ENCODE measurements at regions of chr19 and their contacts with region 1.

Region 1: DNA sequence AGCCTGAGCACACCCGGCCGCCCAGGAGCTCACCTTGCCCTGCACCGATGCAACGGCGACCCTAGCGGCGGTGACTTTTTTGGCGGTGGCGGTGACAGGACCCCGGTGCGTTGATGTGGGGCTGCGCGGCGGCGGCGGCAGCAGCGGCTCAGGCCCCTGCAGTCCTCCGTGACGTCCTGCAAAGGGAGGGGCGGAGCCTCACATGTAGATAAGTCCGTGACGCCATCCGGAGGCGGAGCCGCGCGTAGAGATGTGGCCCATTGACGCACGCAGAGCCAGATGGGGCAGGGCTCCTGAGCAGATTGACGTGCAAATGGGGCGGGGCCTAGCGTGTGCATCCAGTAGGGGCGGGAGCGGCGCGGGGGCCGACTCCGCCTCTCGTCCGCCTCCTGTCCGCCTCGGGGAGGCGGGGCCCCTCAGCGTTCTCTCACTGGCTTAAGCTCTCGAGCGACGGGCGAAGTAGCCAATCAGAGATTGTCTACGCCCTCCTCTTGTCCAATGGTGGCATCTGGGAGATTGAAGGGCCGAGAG is at the start of gene RAB3A:
- DNase-seq: peak; percentile 100
- H3K4me3 ChIP-seq: peak within 1 kb of the TSS; percentile 82 to 83
- H3K27ac ChIP-seq: peak within 1 kb of the TSS; percentile 95 to 98
- H3K4me1 ChIP-seq: peaks cover 7 to 20% of the 10 kb centered on the region in 2 donors
- H3K27me3 ChIP-seq: no peaks in the 10 kb centered on the region
- CTCF ChIP-seq: no peak
- total RNA-seq, gene RAB3A: 12.3 TPM

Region 2: DNA sequence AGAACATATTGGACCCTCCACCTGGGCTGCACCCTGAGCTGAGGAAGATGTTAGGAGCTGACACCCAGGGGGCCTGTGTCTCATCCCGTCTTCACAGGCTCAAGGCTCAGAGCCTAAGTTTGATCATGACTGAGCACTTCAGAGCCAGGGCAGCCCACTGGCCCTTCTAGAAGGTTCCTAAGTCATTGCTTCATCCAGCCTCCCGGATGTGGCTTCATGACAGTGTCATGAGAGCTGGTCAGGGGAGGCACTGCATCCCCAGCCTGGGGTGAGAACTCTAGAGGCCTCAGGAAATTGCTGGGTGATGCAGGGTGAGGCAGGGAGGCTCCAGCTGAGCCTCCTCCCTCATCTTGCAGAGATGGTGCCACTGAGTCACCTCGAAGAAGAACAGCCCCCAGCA is 75.9 kb before region 1 on chr19:
- intact Hi-C with region 1: no loop called
- DNase-seq: no peak
- H3K4me3 ChIP-seq: no peak overlapping the region
- H3K27ac ChIP-seq: no peak overlapping the region
- H3K4me1 ChIP-seq: no peaks in the 10 kb centered on the region
- H3K27me3 ChIP-seq: no peaks in the 10 kb centered on the region
- CTCF ChIP-seq: no peak

Region 3: GRCh38 chr19:18152444-18152816 is 51.5 kb before region 1 on chr19:
- intact Hi-C with region 1: loop called (anchors 1 kb)
- DNase-seq: peak; percentile 94 to 98
- H3K4me3 ChIP-seq: peak overlapping the region; percentile 86 to 96
- H3K27ac ChIP-seq: peak overlapping the region; percentile 93 to 95
- H3K4me1 ChIP-seq: peaks cover 14 to 18% of the 10 kb centered on the region in 2 donors
- H3K27me3 ChIP-seq: no peaks in the 10 kb centered on the region
- CTCF ChIP-seq: peak; percentile 53 to 82 (median 69)

Region 4: DNA sequence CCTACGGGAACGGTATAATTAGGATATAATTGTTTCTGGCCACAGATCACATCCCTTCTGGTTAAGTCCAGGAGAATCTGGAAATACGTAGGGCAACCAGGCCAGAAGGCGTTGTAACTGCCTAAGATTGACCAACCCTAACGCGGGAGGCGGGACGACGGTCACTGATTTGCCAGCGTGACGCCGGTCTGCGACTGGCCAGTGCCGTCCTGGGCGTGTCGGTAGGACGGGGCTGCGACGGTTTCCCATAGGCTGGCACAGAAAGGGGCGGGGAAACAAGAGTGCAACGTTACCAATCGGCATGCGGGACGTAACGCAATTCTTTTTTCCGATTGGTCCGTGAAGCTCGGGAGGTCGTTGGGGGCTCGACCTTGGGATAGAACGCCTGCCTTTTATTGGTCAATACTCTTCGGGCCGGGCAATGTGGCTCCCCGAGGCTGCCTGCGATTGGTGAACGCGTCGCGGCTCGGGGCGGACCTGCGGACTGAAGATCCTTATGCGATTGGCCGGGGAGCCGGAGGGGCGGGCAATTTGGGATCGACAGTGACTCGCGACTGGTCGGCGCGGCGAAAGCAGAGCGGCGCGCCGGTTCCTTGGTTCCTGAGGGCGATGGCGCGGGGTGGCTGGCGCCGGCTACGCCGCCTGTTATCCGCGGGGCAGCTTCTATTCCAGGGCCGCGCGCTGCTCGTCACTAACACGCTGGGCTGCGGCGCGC is 11.1 kb before region 1 on chr19 and contains the start of gene MPV17L2:
- intact Hi-C with region 1: loop called (anchors 1 kb)
- DNase-seq: peak; percentile 98 to 100
- H3K4me3 ChIP-seq: peak within 1 kb of the TSS; percentile 84 to 96
- H3K27ac ChIP-seq: peak within 1 kb of the TSS; percentile 87 to 92
- H3K4me1 ChIP-seq: peaks cover 10 to 11% of the 10 kb centered on the region in 2 donors
- H3K27me3 ChIP-seq: no peaks in the 10 kb centered on the region
- CTCF ChIP-seq: no peak
- total RNA-seq, gene MPV17L2: 9.5 TPM

Region 5: DNA sequence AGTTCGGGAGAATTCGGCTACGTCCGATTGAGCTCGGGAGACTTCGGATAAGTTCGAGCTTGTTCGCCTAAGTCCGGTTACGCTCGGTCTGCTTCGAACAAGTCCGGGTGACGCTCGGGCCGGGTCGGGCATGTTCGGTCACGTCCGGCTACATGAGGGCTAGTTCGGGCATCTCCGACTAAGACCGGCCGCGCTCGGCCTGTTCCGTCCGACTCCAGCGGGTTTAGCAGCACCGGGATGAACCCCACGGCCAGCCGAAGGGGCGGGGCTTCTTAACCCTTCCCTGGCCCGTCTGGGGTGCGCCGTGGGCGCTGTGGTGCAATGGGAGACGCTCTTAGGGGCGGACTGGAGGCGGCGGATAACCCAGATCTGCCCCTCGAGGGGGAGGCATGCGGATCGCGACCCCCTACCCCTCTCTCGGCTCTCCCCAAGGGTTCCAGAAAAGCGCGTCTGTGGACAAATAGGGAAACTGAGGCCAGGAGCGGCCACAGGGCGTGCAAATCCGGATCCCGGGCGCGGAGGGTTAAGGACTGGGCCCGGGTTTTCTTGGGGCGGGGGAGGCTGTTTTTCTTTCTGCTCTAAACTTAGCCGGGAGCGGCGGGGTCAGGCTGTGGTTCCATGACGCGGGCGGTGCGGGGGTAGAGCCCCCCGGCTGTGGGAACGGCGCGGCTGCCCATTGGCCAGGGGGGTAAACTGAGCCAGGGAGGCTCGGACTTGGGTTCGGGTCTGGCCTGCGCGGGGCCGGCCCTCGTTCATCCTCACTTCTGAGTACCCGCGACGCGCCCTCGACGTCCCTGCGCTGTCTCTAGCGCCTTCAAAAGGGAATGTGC is 20.8 kb after region 1 on chr19:
- intact Hi-C with region 1: loop called (anchors 2 kb)
- DNase-seq: peak; percentile 87 to 99
- H3K4me3 ChIP-seq: peak overlapping the region; percentile 44 to 54
- H3K27ac ChIP-seq: no peak overlapping the region
- H3K4me1 ChIP-seq: peaks cover 7 to 15% of the 10 kb centered on the region in 2 donors
- H3K27me3 ChIP-seq: peaks cover 16% of the 10 kb centered on the region
- CTCF ChIP-seq: no peak

Region 6: GRCh38 chr19:18251587-18252369 is 47.9 kb after region 1 on chr19:
- intact Hi-C with region 1: loop called (anchors 1 kb)
- DNase-seq: peak in 1 of 2 donors; percentile 82
- H3K4me3 ChIP-seq: no peak overlapping the region
- H3K27ac ChIP-seq: no peak overlapping the region
- H3K4me1 ChIP-seq: no peaks in the 10 kb centered on the region
- H3K27me3 ChIP-seq: no peaks in the 10 kb centered on the region
- CTCF ChIP-seq: peak; percentile 96 to 98 (median 96)

Region 7: GRCh38 chr19:18419195-18419698 is 215.3 kb after region 1 on chr19 and contains the start of gene SSBP4:
- intact Hi-C with region 1: loop called (anchors 5 kb)
- DNase-seq: peak in 1 of 2 donors; percentile 86
- H3K4me3 ChIP-seq: peak within 1 kb of the TSS; percentile 65 to 75
- H3K27ac ChIP-seq: peak within 1 kb of the TSS; percentile 93 to 96
- H3K4me1 ChIP-seq: peaks cover 15 to 57% of the 10 kb centered on the region in 2 donors
- H3K27me3 ChIP-seq: no peaks in the 10 kb centered on the region
- CTCF ChIP-seq: peak in 1 of 3 experiments; percentile 76
- total RNA-seq, gene SSBP4: 233 TPM

Region 8: DNA sequence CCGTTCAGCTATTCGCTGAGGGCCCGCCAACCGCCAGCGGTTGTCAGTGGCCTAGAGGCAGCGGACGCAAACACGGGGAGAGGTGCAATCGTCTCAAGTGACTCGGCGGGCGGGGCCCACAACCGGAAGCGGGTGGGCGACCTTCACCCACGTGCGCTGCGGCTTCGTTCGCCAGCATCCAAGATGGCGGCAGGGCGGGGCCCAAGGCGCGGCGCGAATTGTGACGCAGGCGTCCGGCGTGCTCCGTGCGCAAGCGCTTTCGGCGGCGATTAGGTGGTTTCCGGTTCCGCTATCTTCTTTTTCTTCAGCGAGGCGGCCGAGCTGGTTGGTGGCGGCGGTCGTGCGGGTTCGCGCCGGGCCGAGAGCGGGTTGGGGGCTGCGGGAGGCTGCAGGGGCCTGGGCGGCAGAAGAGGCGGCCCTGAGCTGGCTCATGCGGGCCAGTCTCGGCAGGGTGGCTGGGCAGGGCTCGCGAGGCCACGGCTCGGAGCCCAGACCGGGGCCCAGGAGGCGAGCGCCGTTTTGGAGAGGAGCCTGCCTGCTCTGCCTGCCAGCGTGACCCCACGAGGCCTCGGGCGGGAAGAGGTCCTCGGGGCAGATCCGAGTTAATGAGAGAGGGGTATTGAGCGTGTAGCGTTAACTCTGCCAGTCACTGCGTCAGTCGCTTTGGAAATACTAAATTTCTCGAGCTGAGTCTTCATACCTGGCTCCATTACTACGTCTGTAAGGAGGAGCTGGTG is 367.8 kb after region 1 on chr19 and contains the start of gene UBA52:
- intact Hi-C with region 1: no loop called
- DNase-seq: peak; percentile 92 to 99
- H3K4me3 ChIP-seq: peak within 1 kb of the TSS; percentile 74 to 83
- H3K27ac ChIP-seq: peak within 1 kb of the TSS; percentile 84 to 95
- H3K4me1 ChIP-seq: peaks cover 11 to 15% of the 10 kb centered on the region in 2 donors
- H3K27me3 ChIP-seq: no peaks in the 10 kb centered on the region
- CTCF ChIP-seq: no peak
- total RNA-seq, gene UBA52: 554 TPM

Measured in ascending aorta (tissue), 2 donors.